ENCODE measurements at regions of chr18 and their contacts with region 1.

Region 1: GRCh38 chr18:63823518-63824219 is 48.5 kb downstream of the SERPINB7 start:
- DNase-seq: peak in 3 of 10 donors; percentile 24 to 55 (median 49)
- H3K4me3 ChIP-seq: no peak overlapping the region
- H3K27ac ChIP-seq: no peak overlapping the region
- H3K27me3 ChIP-seq: peaks cover 0 to 17% (median 0%) of the 10 kb centered on the region in 45 donors
- CTCF ChIP-seq: peak in 54 of 56 donors; percentile 24 to 68 (median 52)

Region 2: GRCh38 chr18:63683152-63683551 is 140.5 kb before region 1 on chr18:
- intact Hi-C with region 1: no loop called
- DNase-seq: no peak
- H3K4me3 ChIP-seq: no peak overlapping the region
- H3K27ac ChIP-seq: no peak overlapping the region
- H3K27me3 ChIP-seq: peaks cover 0 to 22% (median 4%) of the 10 kb centered on the region in 45 donors
- CTCF ChIP-seq: no peak

Region 3: DNA sequence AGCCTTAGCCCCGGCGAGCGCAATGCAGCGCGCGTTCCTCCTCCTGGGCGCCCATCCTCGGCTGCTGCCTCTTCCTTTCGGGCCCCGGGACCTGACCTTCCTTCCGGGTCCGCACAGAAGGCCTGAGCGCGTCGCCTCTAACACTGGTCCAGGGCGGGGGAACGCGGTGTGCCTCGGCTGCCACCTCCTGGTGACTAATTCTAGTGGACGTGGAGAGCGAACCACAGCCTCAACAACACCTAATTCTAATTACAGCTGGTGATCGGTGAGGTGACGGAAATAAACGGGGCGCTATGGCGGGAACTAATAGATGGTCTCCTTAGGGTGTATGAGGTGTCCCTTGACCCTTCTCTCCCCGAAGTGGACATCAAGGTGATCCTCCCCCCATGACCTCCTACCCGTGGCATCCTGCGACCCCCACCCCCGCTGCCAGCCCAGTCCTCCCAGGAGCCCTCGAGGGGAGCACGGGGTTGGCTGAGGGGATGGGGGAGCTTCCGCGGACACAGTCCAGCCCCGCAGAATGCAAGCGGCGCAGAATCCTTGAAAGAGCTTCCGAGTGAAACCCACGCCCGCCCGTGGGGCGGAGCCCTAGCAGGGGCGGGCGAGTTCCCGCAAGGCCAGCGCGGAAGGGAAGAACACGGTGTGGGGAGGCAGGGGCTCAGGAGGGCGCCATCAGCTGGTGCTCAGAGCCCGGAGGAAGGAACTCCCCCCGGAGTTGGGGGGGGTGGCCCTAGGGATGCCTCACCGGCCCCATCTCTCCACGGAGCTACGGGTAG is 112.7 kb after region 1 on chr18:
- intact Hi-C with region 1: loop called in 1 of 2 experiments (anchors 10 kb)
- DNase-seq: peak; percentile 40 to 80 (median 76)
- H3K4me3 ChIP-seq: peak overlapping the region; percentile 29 to 81 (median 65)
- H3K27ac ChIP-seq: peak overlapping the region in 4 of 59 donors; percentile 5 to 70 (median 40)
- H3K27me3 ChIP-seq: peaks cover 0 to 19% (median 0%) of the 10 kb centered on the region in 45 donors
- CTCF ChIP-seq: peak in 55 of 56 donors; percentile 48 to 83 (median 67)

Region 4: DNA sequence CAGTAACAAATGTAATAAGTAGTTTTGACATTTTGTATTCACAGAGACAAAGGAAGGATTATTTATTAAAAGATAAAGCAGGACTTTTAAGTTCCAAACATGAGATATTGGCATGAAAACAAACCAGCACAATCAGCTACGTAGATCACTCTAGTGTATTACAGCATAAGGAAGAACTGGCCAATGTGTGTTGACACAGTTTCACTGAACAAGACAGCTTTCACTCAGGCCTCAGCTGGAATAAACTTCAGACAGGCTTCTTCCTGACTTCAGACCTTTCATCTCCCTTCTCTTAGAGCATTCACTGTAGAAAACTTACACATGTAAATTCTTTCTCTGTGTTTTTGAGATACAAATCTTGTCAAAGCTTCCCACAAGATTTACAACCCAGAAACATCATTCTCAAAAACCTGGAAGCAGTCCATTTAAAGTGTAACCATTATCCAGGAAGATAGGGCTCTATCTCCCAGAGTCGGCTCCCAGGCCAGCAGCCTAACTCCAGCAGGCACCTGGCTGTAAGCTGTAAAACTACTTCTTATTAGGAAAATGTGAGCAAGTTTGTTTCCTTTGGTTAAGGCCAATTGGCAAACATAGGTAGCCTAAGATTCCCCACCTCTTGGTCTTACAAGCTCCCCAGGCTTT is 1158.9 kb after region 1 on chr18:
- intact Hi-C with region 1: no loop called
- DNase-seq: no peak
- H3K4me3 ChIP-seq: no peak overlapping the region
- H3K27ac ChIP-seq: no peak overlapping the region
- H3K27me3 ChIP-seq: no peaks in the 10 kb centered on the region
- CTCF ChIP-seq: no peak